ENCODE measurements at regions of chr5 and their contacts with region 1.

Region 1: DNA sequence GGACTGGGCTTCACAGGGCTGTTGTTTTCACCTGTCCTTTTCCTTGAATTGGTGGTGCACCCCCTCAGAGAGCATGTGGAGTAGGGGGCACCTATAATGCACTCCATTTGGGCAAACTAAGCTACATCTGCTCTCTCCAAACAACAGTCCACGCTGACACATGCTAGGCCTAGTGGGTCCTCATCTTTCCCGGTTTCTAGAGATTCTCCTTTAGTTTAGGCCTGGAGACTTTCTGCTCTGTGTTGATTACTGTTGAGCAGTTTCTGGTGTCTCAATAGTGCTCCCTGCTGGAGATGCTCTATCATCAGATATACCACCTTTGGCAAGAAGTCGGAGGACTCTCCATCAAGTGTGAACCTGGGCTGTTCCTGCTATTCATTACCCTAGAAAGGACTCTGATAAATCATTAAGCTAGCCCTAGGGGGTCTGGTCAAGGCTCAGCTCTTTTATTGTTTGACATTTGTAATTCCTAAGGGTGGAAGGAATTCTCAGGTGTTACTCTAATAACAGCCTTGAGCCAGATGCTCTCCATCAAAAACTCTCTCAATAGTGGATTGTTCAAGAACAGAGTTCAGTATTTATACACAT is 64.0 kb upstream of the FYB1 start:
- DNase-seq: peak; percentile 75
- H3K4me3 Mint-ChIP-seq: no peak overlapping the region
- H3K27ac Mint-ChIP-seq: peak overlapping the region; percentile 69
- H3K4me1 Mint-ChIP-seq: peaks cover 47% of the 10 kb centered on the region
- H3K27me3 Mint-ChIP-seq: no peaks in the 10 kb centered on the region

Region 2: GRCh38 chr5:38441453-38442246 is 841.7 kb before region 1 on chr5:
- CTCF ChIA-PET with region 1: no interaction called
- intact Hi-C with region 1: loop called (anchors 1 kb)
- DNase-seq: peak; percentile 92
- H3K4me3 Mint-ChIP-seq: no peak overlapping the region
- H3K27ac Mint-ChIP-seq: no peak overlapping the region
- H3K4me1 Mint-ChIP-seq: no peaks in the 10 kb centered on the region
- H3K27me3 Mint-ChIP-seq: peaks cover 40% of the 10 kb centered on the region

Region 3: GRCh38 chr5:39005566-39006232 is 277.6 kb before region 1 on chr5:
- CTCF ChIA-PET with region 1: interaction called, 10 read pairs
- intact Hi-C with region 1: loop called (anchors 1 kb)
- DNase-seq: peak; percentile 26
- H3K4me3 Mint-ChIP-seq: no peak overlapping the region
- H3K27ac Mint-ChIP-seq: no peak overlapping the region
- H3K4me1 Mint-ChIP-seq: peaks cover 54% of the 10 kb centered on the region
- H3K27me3 Mint-ChIP-seq: no peaks in the 10 kb centered on the region

Region 4: DNA sequence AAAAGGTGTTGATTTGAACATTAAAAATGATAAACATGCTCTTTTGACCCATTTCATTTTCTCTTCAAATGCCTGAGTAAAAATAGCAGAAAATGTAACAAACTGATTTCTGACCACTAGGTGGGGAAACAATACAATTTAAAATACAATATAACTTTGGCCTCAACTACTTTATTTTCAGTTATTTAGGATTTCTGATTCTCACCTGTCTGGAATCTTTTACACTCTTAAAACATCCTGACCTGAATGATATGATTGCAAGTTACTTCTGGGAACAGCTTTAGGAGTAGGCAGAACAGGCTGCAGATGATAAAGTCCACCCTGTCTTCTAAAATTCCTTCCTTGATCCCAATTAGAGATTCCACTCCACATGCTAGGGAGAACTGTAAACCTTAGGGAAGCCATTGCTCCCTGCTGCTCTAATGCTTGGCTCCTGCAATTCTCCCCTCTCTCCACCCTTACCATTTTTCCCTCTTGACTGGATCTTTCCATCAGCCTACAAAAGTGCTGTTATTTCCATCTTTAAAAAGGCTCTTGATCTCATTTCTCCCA is 134.3 kb before region 1 on chr5:
- CTCF ChIA-PET with region 1: interaction called, 14 read pairs
- intact Hi-C with region 1: loop called (anchors 1 kb)
- DNase-seq: no peak
- H3K4me3 Mint-ChIP-seq: no peak overlapping the region
- H3K27ac Mint-ChIP-seq: peak overlapping the region; percentile 65
- H3K4me1 Mint-ChIP-seq: peaks cover 78% of the 10 kb centered on the region
- H3K27me3 Mint-ChIP-seq: no peaks in the 10 kb centered on the region

Region 5: GRCh38 chr5:39194466-39195136 is 88.7 kb before region 1 on chr5:
- CTCF ChIA-PET with region 1: interaction called, 18 read pairs
- intact Hi-C with region 1: no loop called
- DNase-seq: no peak
- H3K4me3 Mint-ChIP-seq: peak overlapping the region; percentile 76
- H3K27ac Mint-ChIP-seq: peak overlapping the region; percentile 93
- H3K4me1 Mint-ChIP-seq: peaks cover 62% of the 10 kb centered on the region
- H3K27me3 Mint-ChIP-seq: no peaks in the 10 kb centered on the region

Region 6: DNA sequence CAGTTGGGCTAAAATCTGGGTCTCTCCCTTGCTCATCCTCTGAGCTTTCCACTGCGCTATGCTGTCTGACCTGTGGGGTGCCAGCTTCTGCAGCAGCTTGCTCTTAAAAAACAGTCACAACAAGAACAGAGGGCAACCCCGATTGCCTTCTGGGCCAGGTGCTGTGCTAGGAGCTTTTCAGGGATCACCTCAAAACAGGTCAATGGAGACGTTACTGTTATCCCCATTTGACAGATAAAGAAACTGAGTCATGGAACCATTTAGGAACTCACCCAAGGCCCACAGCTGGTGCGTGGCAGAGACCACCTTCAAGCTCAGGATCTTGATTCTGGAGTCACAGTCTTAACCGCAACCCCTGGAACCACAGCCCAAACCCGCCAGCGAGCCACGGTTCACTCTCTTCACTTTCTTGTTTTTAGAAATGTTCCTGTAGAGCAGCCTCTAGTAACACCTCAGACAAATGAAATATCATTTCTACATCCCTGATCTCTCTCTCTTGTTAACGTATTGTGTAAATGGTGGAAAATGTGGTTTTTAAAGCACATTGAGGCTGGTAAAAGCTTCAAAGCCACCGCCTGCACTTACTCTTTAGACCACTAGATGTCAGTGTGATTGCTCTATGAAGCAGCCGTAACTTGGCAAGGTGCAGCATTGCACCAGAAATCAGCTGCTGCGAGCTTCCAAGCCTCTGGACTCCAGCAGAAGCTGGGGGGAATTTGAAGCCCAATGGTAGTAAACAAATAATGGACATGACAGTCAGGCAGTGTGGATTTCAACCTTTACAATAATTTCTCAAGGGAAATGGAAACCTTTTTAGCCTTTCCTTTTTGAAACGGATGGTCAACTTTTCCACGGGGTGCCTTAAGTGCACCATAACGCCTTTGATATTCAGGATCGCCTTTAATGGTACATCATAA is 65.7 kb before region 1 on chr5:
- CTCF ChIA-PET with region 1: interaction called, 317 read pairs
- intact Hi-C with region 1: loop called (anchors 1 kb)
- DNase-seq: peak; percentile 91
- H3K4me3 Mint-ChIP-seq: peak overlapping the region; percentile 72
- H3K27ac Mint-ChIP-seq: peak overlapping the region; percentile 91
- H3K4me1 Mint-ChIP-seq: peaks cover 70% of the 10 kb centered on the region
- H3K27me3 Mint-ChIP-seq: no peaks in the 10 kb centered on the region

Region 7: GRCh38 chr5:39355324-39355723 is 72.0 kb after region 1 on chr5:
- CTCF ChIA-PET with region 1: no interaction called
- intact Hi-C with region 1: no loop called
- DNase-seq: no peak
- H3K4me3 Mint-ChIP-seq: no peak overlapping the region
- H3K27ac Mint-ChIP-seq: no peak overlapping the region
- H3K4me1 Mint-ChIP-seq: peaks cover 4% of the 10 kb centered on the region
- H3K27me3 Mint-ChIP-seq: no peaks in the 10 kb centered on the region

Region 8: DNA sequence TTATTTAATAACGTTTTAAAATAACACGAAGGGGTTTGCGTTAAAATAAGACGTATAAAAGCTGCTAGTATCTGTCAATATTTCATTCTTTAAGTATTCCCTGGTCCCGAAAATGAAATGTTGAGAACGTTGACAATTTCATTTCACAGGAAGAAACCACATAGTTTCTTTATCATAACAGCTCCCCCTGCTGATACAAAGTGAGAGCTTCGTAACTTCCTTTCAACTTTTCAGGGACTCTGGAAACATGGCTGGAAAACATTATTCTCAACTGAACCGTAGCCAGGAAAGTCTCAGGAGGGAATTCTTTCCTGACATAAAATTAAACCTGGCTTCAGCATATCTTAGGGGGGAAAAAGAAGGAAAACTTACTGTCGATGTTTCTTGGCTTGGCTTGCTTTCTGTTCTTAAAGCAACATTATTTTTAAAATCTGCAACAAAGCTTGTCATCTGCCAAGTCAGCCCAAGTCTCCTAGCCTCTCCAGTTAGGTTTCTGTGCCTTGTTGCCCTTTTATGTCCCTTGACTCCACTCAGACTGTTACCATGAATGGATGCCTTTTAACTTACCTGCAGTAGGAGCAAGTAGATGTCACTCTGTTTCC is 264.3 kb after region 1 on chr5:
- CTCF ChIA-PET with region 1: no interaction called
- intact Hi-C with region 1: loop called (anchors 2 kb)
- DNase-seq: peak; percentile 20
- H3K4me3 Mint-ChIP-seq: no peak overlapping the region
- H3K27ac Mint-ChIP-seq: no peak overlapping the region
- H3K4me1 Mint-ChIP-seq: peaks cover 2% of the 10 kb centered on the region
- H3K27me3 Mint-ChIP-seq: no peaks in the 10 kb centered on the region

Region 9: GRCh38 chr5:40033411-40033810 is 750.1 kb after region 1 on chr5:
- CTCF ChIA-PET with region 1: no interaction called
- intact Hi-C with region 1: no loop called
- DNase-seq: peak; percentile 51
- H3K4me3 Mint-ChIP-seq: no peak overlapping the region
- H3K27ac Mint-ChIP-seq: no peak overlapping the region
- H3K4me1 Mint-ChIP-seq: peaks cover 10% of the 10 kb centered on the region
- H3K27me3 Mint-ChIP-seq: no peaks in the 10 kb centered on the region

Measured in activated naive CD4-positive, alpha-beta T cell treated with anti-CD3 and anti-CD28 coated beads for 36 hours (primary cell).